ENCODE measurements at regions of chr15 and their contacts with region 1.

Region 1: DNA sequence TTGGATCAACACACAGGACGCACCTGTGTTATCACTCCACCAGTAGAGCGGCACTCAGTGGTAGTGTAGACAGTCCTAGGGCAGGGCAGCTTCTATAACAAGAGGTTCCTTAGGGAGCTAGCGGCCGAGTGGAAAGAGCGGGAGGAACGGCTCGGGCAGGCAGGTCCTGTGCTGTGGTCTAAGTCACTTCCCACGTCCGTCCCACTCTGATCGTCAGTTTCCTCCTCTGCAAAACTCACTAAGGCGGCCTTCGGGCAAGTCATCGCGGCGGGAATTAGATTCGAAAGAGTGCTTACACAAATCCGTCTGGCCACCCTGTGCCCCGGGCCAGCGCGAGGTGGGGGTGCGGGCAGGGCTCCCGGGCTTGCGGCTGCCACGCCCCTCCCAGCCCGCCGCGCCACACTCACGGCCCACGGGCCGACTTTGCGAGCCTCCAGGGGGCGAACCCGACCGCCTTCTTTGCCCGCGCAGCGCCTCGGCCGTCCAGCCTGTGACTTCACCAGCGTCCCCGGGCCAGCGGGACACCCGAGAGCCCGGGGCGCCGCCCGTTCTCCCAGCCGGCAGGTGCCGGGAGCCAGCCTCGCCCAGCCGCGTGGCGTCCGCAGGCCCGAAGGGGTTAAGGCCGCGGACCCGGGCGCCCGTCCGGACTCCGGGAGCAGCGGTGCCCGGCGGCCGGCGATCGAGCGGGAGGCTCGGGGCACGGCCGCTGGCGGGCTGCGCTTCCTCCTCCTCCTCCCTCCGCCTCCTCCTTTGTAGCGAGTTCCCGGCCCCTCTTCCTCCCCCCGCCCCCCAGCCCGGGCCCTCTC is 416 bp upstream of the CORO2B start:
- DNase-seq: peak; percentile 76
- H3K4me3 ChIP-seq: peak overlapping the region; percentile 77
- H3K27ac ChIP-seq: peak overlapping the region; percentile 65
- H3K4me1 ChIP-seq: peaks cover 80% of the 10 kb centered on the region
- CTCF ChIP-seq: peak; percentile 67

Region 2: DNA sequence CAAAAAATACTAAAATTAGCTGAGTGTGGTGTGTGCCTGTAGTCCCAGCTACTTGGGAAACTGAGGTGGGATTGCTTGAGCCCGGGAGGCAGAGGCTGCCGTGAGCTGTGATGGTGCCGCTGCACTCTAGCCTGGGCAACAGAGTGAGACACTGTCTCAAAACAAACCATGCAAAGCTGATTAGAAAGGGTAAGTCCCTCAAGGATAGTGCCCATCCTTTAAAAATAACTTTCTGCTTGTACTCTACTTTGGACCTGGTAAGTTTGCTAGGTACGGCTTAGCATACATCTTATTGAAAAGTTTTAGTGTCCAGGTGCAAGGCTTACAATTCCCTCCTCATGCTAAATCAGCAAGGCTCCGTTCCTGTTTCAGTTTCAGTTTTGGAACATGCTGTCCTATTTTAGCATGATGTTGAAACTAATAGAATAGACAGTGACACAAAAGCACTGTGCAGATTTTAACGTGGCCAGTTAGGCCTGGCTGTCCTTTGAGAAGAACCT is 279.4 kb before region 1 on chr15:
- CTCF ChIA-PET with region 1: no interaction called
- POLR2A ChIA-PET with region 1: no interaction called
- intact Hi-C with region 1: no loop called
- DNase-seq: peak; percentile 81
- H3K4me3 ChIP-seq: peak overlapping the region; percentile 42
- H3K27ac ChIP-seq: peak overlapping the region; percentile 46
- H3K4me1 ChIP-seq: peaks cover 29% of the 10 kb centered on the region
- CTCF ChIP-seq: no peak

Region 3: DNA sequence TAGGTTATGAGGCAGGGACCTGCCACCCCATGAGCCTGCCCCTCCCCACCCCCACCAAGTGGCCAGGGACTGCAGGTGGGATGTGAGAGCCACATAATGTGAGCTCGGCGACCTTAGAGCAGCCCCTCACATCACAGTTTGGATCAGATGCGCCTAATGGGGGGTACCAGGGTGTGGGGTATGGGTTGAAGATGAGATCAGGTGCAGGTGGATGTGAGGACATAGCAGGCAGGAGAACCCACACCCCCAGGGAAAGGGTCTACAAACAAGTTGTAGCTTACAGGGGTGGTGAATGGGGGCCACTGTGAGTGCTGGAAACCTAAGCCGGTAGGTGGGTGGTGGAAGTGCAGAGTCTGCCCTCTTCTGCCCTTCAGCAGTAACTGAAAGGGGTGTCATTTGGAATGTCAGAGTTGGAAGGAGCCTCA is 94.4 kb after region 1 on chr15:
- CTCF ChIA-PET with region 1: no interaction called
- POLR2A ChIA-PET with region 1: no interaction called
- intact Hi-C with region 1: loop called (anchors 1 kb)
- DNase-seq: peak; percentile 70
- H3K4me3 ChIP-seq: no peak overlapping the region
- H3K27ac ChIP-seq: peak overlapping the region; percentile 14
- H3K4me1 ChIP-seq: peaks cover 47% of the 10 kb centered on the region
- CTCF ChIP-seq: peak; percentile 76

Region 4: DNA sequence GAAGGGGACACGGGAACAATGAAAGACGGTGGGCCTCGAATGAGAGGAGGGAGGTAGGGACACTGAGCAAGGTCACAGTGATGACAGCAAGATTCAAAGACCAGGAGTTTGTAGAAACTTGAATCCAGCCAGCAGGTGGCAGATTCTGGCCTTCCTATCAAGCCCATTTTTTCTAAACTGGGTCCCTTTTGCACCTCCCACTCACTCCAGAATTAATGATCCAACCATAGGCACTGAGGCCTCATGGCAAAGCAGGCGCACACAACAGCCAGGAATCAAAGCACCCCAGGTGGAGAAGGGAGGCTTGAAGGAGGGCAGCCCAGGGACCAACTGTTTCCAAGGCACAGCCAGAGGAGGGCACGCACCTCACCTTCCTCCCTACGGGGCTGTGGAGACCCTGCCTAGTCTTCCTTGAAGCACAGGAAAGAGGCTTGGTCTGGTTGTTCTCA is 152.1 kb after region 1 on chr15:
- CTCF ChIA-PET with region 1: no interaction called
- POLR2A ChIA-PET with region 1: no interaction called
- intact Hi-C with region 1: no loop called
- DNase-seq: peak; percentile 71
- H3K4me3 ChIP-seq: no peak overlapping the region
- H3K27ac ChIP-seq: no peak overlapping the region
- H3K4me1 ChIP-seq: peaks cover 7% of the 10 kb centered on the region
- CTCF ChIP-seq: peak; percentile 86

Region 5: GRCh38 chr15:68885070-68885469 is 306.7 kb after region 1 on chr15:
- CTCF ChIA-PET with region 1: no interaction called
- POLR2A ChIA-PET with region 1: no interaction called
- intact Hi-C with region 1: no loop called
- DNase-seq: no peak
- H3K4me3 ChIP-seq: no peak overlapping the region
- H3K27ac ChIP-seq: no peak overlapping the region
- H3K4me1 ChIP-seq: no peaks in the 10 kb centered on the region
- CTCF ChIP-seq: no peak